Body of pancreas (tissue), 4 donors: ENCODE measurements at regions of chr22 and their contacts with region 1.

Region 1: GRCh38 chr22:37681556-37682049 is 4.5 kb upstream of the NOL12 start:
- DNase-seq: peak; percentile 84 to 87 (median 86)
- ATAC-seq: peak; percentile 73
- H3K4me3 ChIP-seq: no peak overlapping the region
- H3K27ac ChIP-seq: no peak overlapping the region
- H3K4me1 ChIP-seq: peaks cover 23% of the 10 kb centered on the region
- H3K27me3 ChIP-seq: no peaks in the 10 kb centered on the region
- CTCF ChIP-seq: peak; percentile 78 to 95 (median 92)
- POLR2A ChIP-seq: no peak

Region 2: DNA sequence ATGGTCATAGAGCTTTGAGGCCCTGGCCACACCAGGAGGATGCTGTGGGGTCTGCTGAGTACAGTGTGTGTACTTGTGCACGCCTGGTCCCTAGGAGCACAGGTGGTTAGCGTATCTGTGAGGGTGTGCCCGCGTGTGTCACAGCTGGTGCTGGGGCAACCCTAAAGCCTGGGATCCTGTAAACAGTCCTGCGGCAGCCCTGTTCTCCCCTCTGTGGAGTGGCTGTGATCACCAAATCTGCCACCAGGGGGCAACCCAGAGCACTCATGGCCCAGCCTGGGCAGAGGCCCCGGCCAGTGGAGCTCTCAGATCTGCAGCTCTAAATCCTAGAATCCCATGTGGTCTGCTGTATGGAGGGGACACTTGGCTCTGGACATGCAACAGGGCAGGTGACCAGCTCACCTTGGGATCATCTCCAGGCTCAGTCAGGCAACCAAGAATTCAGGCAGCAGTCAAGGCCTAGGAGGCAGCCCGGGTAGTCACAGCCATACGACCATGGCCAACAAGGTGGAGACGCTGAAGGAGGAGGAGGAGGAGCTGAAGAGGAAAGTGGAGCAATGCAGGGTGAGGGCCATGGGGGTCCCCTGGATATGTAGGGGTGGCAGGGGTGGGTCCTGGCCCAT is 38.3 kb before region 1 on chr22:
- intact Hi-C with region 1: loop called (anchors 5 kb)
- DNase-seq: peak; percentile 83 to 91 (median 88)
- ATAC-seq: peak; percentile 80
- H3K4me3 ChIP-seq: no peak overlapping the region
- H3K27ac ChIP-seq: no peak overlapping the region
- H3K4me1 ChIP-seq: peaks cover 38% of the 10 kb centered on the region
- H3K27me3 ChIP-seq: no peaks in the 10 kb centered on the region
- CTCF ChIP-seq: peak; percentile 84 to 90 (median 88)
- POLR2A ChIP-seq: no peak

Region 3: DNA sequence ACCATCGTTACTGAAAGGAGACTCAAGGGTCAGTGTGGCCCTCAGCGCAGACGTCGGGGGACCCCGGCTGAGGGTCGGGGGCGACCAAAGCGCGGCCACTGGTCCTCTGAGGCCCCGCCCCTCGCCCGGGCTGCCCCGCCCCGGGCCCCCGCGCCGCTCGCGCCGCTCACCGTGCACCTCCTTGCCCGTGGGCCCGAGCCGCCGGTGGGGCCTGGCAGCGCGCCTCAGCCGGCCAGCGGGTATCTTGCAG is 162.1 kb after region 1 on chr22:
- intact Hi-C with region 1: no loop called
- DNase-seq: peak in 1 of 4 donors; percentile 66
- ATAC-seq: peak; percentile 33
- H3K4me3 ChIP-seq: peak overlapping the region; percentile 20 to 53
- H3K27ac ChIP-seq: peak overlapping the region; percentile 83 to 98 (median 88)
- H3K4me1 ChIP-seq: peaks cover 36% of the 10 kb centered on the region
- H3K27me3 ChIP-seq: no peaks in the 10 kb centered on the region
- CTCF ChIP-seq: no peak
- POLR2A ChIP-seq: no peak

Region 4: DNA sequence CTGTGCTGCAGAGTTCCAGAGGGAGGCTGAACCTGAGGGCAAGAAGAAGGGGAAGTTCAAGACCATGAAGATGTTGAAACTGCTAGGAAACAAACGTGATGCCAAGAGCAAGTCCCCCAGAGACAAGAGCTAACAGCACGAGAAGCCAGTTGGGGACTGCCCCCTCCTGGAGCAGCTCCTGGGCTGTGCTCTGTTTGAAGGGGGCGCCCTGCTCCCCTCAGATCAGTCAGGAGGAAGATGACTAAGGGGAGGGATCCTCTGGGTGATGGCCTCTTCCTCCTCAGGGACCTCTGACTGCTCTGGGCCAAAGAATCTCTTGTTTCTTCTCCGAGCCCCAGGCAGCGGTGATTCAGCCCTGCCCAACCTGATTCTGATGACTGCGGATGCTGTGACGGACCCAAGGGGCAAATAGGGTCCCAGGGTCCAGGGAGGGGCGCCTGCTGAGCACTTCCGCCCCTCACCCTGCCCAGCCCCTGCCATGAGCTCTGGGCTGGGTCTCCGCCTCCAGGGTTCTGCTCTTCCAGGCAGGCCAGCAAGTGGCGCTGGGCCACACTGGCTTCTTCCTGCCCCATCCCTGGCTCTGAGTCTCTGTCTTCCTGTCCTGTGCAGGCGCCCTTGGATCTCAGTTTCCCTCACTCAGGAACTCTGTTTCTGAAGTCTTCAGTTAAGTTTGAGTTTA is 259.2 kb after region 1 on chr22:
- intact Hi-C with region 1: no loop called
- DNase-seq: no peak
- ATAC-seq: peak; percentile 15
- H3K4me3 ChIP-seq: no peak overlapping the region
- H3K27ac ChIP-seq: no peak overlapping the region
- H3K4me1 ChIP-seq: no peaks in the 10 kb centered on the region
- H3K27me3 ChIP-seq: no peaks in the 10 kb centered on the region
- CTCF ChIP-seq: no peak
- POLR2A ChIP-seq: no peak